ENCODE measurements at regions of chr1 and their contacts with region 1.

Region 1: GRCh38 chr1:227357171-227357880 is 39.0 kb upstream of the CDC42BPA start:
- DNase-seq: peak; percentile 94
- H3K4me3 Mint-ChIP-seq: peak overlapping the region; percentile 10
- H3K27ac Mint-ChIP-seq: peak overlapping the region; percentile 62
- H3K4me1 Mint-ChIP-seq: peaks cover 18% of the 10 kb centered on the region
- H3K27me3 Mint-ChIP-seq: no peaks in the 10 kb centered on the region
- CTCF ChIP-seq: no peak

Region 2: DNA sequence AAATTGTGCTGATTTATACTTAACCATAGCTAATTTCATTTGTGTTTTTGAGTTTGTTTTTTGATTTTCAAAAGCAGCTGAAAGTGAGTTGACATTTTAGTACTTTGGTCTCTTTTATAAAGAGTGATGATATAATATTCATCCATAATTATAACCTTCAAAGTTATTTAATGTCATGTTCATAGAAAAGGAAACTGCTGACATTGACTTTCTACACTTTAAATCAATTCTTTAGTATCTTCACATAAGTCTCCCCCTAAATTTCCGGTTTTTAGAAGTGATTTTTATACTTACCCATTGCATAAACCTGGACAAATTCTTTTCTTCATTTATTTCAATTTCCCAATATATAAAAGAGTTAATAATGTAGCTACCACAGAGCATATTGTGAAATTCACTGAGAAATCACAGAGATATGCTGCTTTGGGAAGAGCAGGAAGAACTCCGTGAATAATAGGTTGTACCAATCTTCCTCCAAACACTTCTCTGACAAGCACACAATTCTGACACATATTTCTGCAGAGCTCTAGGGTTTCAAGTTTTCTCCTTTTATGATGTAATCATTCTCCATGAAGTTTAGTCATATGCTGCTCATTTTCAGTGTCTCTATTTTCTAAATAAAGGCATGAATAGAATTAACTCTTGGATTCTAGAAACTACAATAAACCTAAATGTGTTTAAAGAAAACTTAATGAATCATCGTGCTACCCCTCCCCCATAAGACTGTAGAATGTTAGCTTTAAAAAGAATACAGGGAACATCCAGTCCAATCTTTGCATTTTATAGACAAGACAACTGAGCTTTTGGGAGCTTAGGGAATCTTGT is 13.4 kb before region 1 on chr1:
- CTCF ChIA-PET with region 1: interaction called, 12 read pairs
- POLR2A ChIA-PET with region 1: interaction called, 68 read pairs
- intact Hi-C with region 1: loop called (anchors 1 kb)
- DNase-seq: peak; percentile 96
- H3K4me3 Mint-ChIP-seq: peak overlapping the region; percentile 4
- H3K27ac Mint-ChIP-seq: peak overlapping the region; percentile 75
- H3K4me1 Mint-ChIP-seq: peaks cover 19% of the 10 kb centered on the region
- H3K27me3 Mint-ChIP-seq: no peaks in the 10 kb centered on the region
- CTCF ChIP-seq: no peak

Region 3: GRCh38 chr1:227370533-227371254 is 13.4 kb after region 1 on chr1:
- CTCF ChIA-PET with region 1: interaction called, 6 read pairs
- POLR2A ChIA-PET with region 1: interaction called, 12 read pairs
- intact Hi-C with region 1: no loop called
- DNase-seq: no peak
- H3K4me3 Mint-ChIP-seq: no peak overlapping the region
- H3K27ac Mint-ChIP-seq: no peak overlapping the region
- H3K4me1 Mint-ChIP-seq: peaks cover 13% of the 10 kb centered on the region
- H3K27me3 Mint-ChIP-seq: no peaks in the 10 kb centered on the region
- CTCF ChIP-seq: no peak